ENCODE measurements at regions of chr14 and their contacts with region 1.

Region 1: GRCh38 chr14:77760381-77761246 is at the start of gene SNW1:
- DNase-seq: peak; percentile 96
- H3K4me3 ChIP-seq: peak within 1 kb of the TSS; percentile 79 to 93 (median 82)
- H3K27ac ChIP-seq: peak within 1 kb of the TSS; percentile 94
- H3K4me1 ChIP-seq: peaks cover 8% of the 10 kb centered on the region
- H3K27me3 ChIP-seq: no peaks in the 10 kb centered on the region
- CTCF ChIP-seq: no peak
- POLR2A ChIP-seq: peak; percentile 82
- total RNA-seq, gene SNW1: 96.3 and 104 TPM in 2 replicates

Region 2: DNA sequence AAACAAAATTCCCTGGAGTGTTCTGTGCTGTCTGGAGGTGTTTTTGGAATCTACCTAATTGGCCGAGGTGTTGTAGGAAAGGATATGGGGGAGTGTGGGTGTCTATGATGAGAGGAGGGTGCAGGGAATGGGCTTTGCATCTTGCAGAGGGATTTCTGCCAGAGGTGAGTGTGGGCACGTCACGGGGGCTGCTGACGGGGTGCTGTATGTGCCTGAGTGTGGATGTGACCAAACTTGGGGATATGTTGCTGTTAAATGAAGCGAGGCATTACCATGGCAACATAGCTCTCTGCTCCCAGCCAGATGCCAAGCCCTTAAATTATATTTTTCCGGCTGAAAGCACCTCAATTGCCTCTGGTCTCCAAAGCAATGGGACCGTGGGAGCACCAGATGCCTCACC is 99.9 kb before region 1 on chr14:
- CTCF ChIA-PET with region 1: no interaction called
- POLR2A ChIA-PET with region 1: no interaction called
- dilution Hi-C with region 1: no loop called
- intact Hi-C with region 1: loop called (anchors 5 kb)
- DNase-seq: no peak
- H3K4me3 ChIP-seq: no peak overlapping the region
- H3K27ac ChIP-seq: no peak overlapping the region
- H3K4me1 ChIP-seq: peaks cover 12% of the 10 kb centered on the region
- H3K27me3 ChIP-seq: no peaks in the 10 kb centered on the region
- CTCF ChIP-seq: no peak
- POLR2A ChIP-seq: no peak

Region 3: GRCh38 chr14:77707724-77708408 is 52.7 kb before region 1 on chr14 and contains the starts of genes ALKBH1 and SLIRP:
- CTCF ChIA-PET with region 1: no interaction called
- POLR2A ChIA-PET with region 1: no interaction called
- dilution Hi-C with region 1: no loop called
- intact Hi-C with region 1: loop called (anchors 2 kb)
- DNase-seq: peak; percentile 85
- H3K4me3 ChIP-seq: peak within 1 kb of the TSS; percentile 44 to 98 (median 98)
- H3K27ac ChIP-seq: peak within 1 kb of the TSS; percentile 19
- H3K4me1 ChIP-seq: peaks cover 21% of the 10 kb centered on the region
- H3K27me3 ChIP-seq: no peaks in the 10 kb centered on the region
- CTCF ChIP-seq: no peak
- POLR2A ChIP-seq: peak; percentile 94
- total RNA-seq, gene ALKBH1: 13.1 and 14.8 TPM in 2 replicates
- total RNA-seq, gene SLIRP: 160 and 177 TPM in 2 replicates

Region 4: GRCh38 chr14:77738559-77739250 is 21.9 kb before region 1 on chr14:
- CTCF ChIA-PET with region 1: interaction called, 5 read pairs
- POLR2A ChIA-PET with region 1: no interaction called
- dilution Hi-C with region 1: no loop called
- intact Hi-C with region 1: loop called (anchors 1 kb)
- DNase-seq: peak; percentile 87
- H3K4me3 ChIP-seq: peak overlapping the region in 1 of 3 experiments; percentile 1
- H3K27ac ChIP-seq: peak overlapping the region; percentile 78
- H3K4me1 ChIP-seq: peaks cover 16% of the 10 kb centered on the region
- H3K27me3 ChIP-seq: no peaks in the 10 kb centered on the region
- CTCF ChIP-seq: no peak
- POLR2A ChIP-seq: no peak

Region 5: GRCh38 chr14:77782202-77782601 is 21.6 kb after region 1 on chr14:
- CTCF ChIA-PET with region 1: no interaction called
- POLR2A ChIA-PET with region 1: no interaction called
- dilution Hi-C with region 1: no loop called
- intact Hi-C with region 1: no loop called
- DNase-seq: no peak
- H3K4me3 ChIP-seq: no peak overlapping the region
- H3K27ac ChIP-seq: no peak overlapping the region
- H3K4me1 ChIP-seq: no peaks in the 10 kb centered on the region
- H3K27me3 ChIP-seq: no peaks in the 10 kb centered on the region
- CTCF ChIP-seq: no peak
- POLR2A ChIP-seq: no peak

Measured in endothelial cell of umbilical vein (primary cell).